Caco-2 (cell line): ENCODE measurements at regions of chr11 and their contacts with region 1.

Region 1: DNA sequence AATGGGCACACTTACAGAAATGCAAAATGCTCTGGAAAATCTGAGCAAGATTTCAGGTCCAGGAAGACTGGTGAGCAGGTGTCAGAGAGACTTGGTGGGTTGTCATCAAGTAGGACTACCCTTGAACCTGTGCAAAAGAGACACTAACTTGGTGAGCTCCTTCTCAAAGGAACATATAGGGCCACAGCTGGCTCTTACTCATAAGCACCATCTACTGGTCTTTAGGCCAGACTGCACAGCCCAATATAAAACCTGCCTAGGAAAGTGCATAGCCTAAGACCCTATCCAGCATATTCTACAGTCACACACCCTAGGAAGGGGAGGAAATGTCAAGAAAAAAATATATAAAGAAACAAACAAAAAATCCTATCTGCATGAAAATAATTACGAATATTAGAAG is 18.2 kb upstream of the OR10W1 start:
- DNase-seq: peak; percentile 38 to 47
- H3K4me3 ChIP-seq: no peak overlapping the region
- H3K4me3 Mint-ChIP-seq: no peak overlapping the region
- H3K27ac Mint-ChIP-seq: no peak overlapping the region
- H3K4me1 ChIP-seq: 0 out of 2 replicates have a peak, but pooled peaks cover 8% of the 10 kb centered on the region
- H3K4me1 Mint-ChIP-seq: peaks cover 6% of the 10 kb centered on the region
- H3K27me3 ChIP-seq: no peaks in the 10 kb centered on the region
- H3K27me3 Mint-ChIP-seq: no peaks in the 10 kb centered on the region
- CTCF ChIP-seq: peak; percentile 76 to 88

Region 2: DNA sequence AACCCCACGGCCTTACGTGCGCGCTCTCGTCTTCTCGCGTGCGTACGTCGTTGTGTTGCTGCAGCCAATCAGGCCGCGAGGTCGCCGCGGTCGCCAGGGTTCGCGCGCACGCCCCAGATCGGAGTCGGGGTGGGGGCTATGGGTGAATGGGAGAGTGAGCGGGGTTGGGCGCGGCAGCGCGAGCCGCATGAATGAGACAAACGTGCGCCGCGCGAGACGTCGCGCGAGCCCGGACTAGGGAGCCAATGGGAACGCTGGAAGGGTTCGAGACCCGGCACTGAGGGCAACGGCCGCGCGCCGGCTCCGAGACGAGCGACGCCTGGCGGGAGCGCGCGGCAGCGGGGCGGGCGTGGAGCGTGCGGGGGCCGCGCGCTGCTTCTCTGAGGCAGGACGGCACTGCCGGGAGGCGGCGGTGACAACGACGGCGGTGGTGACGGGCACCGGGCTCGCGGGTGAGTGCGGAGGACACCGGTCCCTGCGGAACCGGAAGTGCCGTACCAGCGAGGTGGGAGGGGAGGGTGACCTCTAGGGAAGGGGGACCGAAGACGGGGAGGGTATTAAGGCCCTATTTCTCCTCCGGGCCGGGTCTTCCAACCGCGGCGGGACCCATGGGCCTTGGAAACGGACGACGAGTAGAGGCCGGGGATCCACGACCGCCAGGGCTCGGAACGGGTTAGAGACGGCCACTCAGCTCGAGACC is 618.4 kb before region 1 on chr11 and contains the start of gene ZDHHC5:
- CTCF ChIA-PET with region 1: interaction called, 5 read pairs
- POLR2A ChIA-PET with region 1: no interaction called
- intact Hi-C with region 1: loop called (anchors 5 kb)
- DNase-seq: peak; percentile 100
- H3K4me3 ChIP-seq: peak within 1 kb of the TSS; percentile 74
- H3K4me3 Mint-ChIP-seq: peak within 1 kb of the TSS; percentile 99
- H3K27ac Mint-ChIP-seq: peak within 1 kb of the TSS; percentile 100
- H3K4me1 ChIP-seq: peaks cover 14% of the 10 kb centered on the region; the same call in 1 of the 2 replicates
- H3K4me1 Mint-ChIP-seq: peaks cover 12% of the 10 kb centered on the region
- H3K27me3 ChIP-seq: no peaks in the 10 kb centered on the region
- H3K27me3 Mint-ChIP-seq: no peaks in the 10 kb centered on the region
- CTCF ChIP-seq: peak; percentile 4 to 46
- total RNA-seq, gene ZDHHC5: 66.0 and 72.2 TPM in 2 replicates

Region 3: DNA sequence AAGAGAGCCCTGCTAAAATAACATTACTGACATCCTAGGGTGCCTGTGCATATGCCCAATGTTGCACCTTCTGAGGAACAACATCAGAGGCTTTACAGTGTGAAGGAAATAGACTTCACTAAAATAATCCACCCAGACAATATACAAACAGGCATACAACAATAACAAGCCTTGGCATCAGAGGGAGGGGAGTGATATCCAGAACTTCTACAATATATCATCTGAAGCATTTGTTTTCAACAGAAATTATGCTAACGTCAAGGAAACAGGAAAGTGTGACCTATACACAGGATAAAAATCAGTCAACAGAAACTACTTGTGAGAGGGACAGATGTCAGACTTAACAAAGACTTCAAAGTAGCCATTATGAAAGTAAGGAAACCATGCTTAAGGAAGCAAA is 443.4 kb before region 1 on chr11:
- CTCF ChIA-PET with region 1: no interaction called
- POLR2A ChIA-PET with region 1: no interaction called
- intact Hi-C with region 1: loop called (anchors 1 kb)
- DNase-seq: no peak
- H3K4me3 ChIP-seq: no peak overlapping the region
- H3K4me3 Mint-ChIP-seq: no peak overlapping the region
- H3K27ac Mint-ChIP-seq: no peak overlapping the region
- H3K4me1 ChIP-seq: no peaks in the 10 kb centered on the region
- H3K4me1 Mint-ChIP-seq: no peaks in the 10 kb centered on the region
- H3K27me3 ChIP-seq: 0 out of 2 replicates have a peak, but pooled peaks cover 1% of the 10 kb centered on the region
- H3K27me3 Mint-ChIP-seq: no peaks in the 10 kb centered on the region
- CTCF ChIP-seq: no peak

Region 4: GRCh38 chr11:58061813-58062212 is 224.4 kb before region 1 on chr11:
- CTCF ChIA-PET with region 1: interaction called, 12 read pairs
- POLR2A ChIA-PET with region 1: no interaction called
- intact Hi-C with region 1: loop called (anchors 2 kb)
- DNase-seq: no peak
- H3K4me3 ChIP-seq: no peak overlapping the region
- H3K4me3 Mint-ChIP-seq: no peak overlapping the region
- H3K27ac Mint-ChIP-seq: no peak overlapping the region
- H3K4me1 ChIP-seq: peaks cover 33% of the 10 kb centered on the region
- H3K4me1 Mint-ChIP-seq: peaks cover 17% of the 10 kb centered on the region
- H3K27me3 ChIP-seq: no peaks in the 10 kb centered on the region
- H3K27me3 Mint-ChIP-seq: no peaks in the 10 kb centered on the region
- CTCF ChIP-seq: no peak

Region 5: GRCh38 chr11:58133309-58134076 is 152.8 kb before region 1 on chr11:
- CTCF ChIA-PET with region 1: interaction called, 101 read pairs
- POLR2A ChIA-PET with region 1: interaction called, 3 read pairs
- intact Hi-C with region 1: loop called (anchors 1 kb)
- DNase-seq: peak; percentile 45 to 51
- H3K4me3 ChIP-seq: no peak overlapping the region
- H3K4me3 Mint-ChIP-seq: no peak overlapping the region
- H3K27ac Mint-ChIP-seq: no peak overlapping the region
- H3K4me1 ChIP-seq: 0 out of 2 replicates have a peak, but pooled peaks cover 5% of the 10 kb centered on the region
- H3K4me1 Mint-ChIP-seq: peaks cover 12% of the 10 kb centered on the region
- H3K27me3 ChIP-seq: no peaks in the 10 kb centered on the region
- H3K27me3 Mint-ChIP-seq: no peaks in the 10 kb centered on the region
- CTCF ChIP-seq: peak in 1 of 2 experiments; percentile 29

Region 6: GRCh38 chr11:58192229-58192628 is 94.0 kb before region 1 on chr11:
- CTCF ChIA-PET with region 1: interaction called, 4 read pairs
- POLR2A ChIA-PET with region 1: no interaction called
- intact Hi-C with region 1: loop called (anchors 1 kb)
- DNase-seq: peak; percentile 71 to 87
- H3K4me3 ChIP-seq: no peak overlapping the region
- H3K4me3 Mint-ChIP-seq: peak overlapping the region; percentile 27
- H3K27ac Mint-ChIP-seq: peak overlapping the region; percentile 83
- H3K4me1 ChIP-seq: peaks cover 44% of the 10 kb centered on the region
- H3K4me1 Mint-ChIP-seq: peaks cover 37% of the 10 kb centered on the region
- H3K27me3 ChIP-seq: no peaks in the 10 kb centered on the region
- H3K27me3 Mint-ChIP-seq: no peaks in the 10 kb centered on the region
- CTCF ChIP-seq: no peak

Region 7: DNA sequence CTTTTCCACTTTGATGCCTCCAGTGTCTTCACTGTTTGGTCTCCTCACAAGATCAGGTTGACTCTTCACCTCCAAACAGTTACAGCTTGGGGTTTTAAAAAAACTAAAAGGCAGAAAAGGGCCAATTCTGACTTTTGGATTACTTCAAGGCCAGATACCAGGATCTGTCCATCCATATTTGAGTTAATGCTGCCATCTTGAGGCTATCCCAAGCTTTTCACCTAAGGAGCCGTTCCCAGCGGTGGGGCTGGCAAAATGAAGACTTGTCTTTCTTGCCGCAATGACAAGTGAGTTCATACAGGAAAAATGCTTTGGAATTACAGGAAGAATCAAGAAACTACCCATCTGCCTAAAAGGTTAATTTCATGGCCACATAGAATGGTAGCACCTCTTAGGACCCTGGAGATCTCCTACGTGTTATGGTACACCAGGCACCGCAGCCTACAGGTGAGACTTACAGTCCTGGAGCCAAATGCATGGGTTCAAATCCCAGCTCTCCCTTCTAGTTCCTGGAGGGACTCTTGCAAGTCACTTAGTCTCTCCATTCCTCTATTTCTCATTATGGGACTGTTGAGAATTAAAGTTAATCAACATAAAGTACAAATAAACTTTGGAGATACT is 227.6 kb after region 1 on chr11:
- CTCF ChIA-PET with region 1: interaction called, 5 read pairs
- POLR2A ChIA-PET with region 1: no interaction called
- intact Hi-C with region 1: loop called (anchors 1 kb)
- DNase-seq: peak; percentile 49 to 70
- H3K4me3 ChIP-seq: no peak overlapping the region
- H3K4me3 Mint-ChIP-seq: no peak overlapping the region
- H3K27ac Mint-ChIP-seq: no peak overlapping the region
- H3K4me1 ChIP-seq: no peaks in the 10 kb centered on the region
- H3K4me1 Mint-ChIP-seq: no peaks in the 10 kb centered on the region
- H3K27me3 ChIP-seq: no peaks in the 10 kb centered on the region
- H3K27me3 Mint-ChIP-seq: peaks cover 16% of the 10 kb centered on the region
- CTCF ChIP-seq: peak; percentile 72 to 73